ENCODE measurements at regions of chr4 and their contacts with region 1.

Region 1: GRCh38 chr4:95510145-95510544 is 38.6 kb downstream of the UNC5C start:
- DNase-seq: peak; percentile 52
- H3K4me3 ChIP-seq: no peak overlapping the region
- H3K27ac ChIP-seq: no peak overlapping the region
- H3K4me1 ChIP-seq: peaks cover 37% of the 10 kb centered on the region
- H3K27me3 ChIP-seq: no peaks in the 10 kb centered on the region
- CTCF ChIP-seq: peak; percentile 45 to 52
- POLR2A ChIP-seq: no peak

Region 2: DNA sequence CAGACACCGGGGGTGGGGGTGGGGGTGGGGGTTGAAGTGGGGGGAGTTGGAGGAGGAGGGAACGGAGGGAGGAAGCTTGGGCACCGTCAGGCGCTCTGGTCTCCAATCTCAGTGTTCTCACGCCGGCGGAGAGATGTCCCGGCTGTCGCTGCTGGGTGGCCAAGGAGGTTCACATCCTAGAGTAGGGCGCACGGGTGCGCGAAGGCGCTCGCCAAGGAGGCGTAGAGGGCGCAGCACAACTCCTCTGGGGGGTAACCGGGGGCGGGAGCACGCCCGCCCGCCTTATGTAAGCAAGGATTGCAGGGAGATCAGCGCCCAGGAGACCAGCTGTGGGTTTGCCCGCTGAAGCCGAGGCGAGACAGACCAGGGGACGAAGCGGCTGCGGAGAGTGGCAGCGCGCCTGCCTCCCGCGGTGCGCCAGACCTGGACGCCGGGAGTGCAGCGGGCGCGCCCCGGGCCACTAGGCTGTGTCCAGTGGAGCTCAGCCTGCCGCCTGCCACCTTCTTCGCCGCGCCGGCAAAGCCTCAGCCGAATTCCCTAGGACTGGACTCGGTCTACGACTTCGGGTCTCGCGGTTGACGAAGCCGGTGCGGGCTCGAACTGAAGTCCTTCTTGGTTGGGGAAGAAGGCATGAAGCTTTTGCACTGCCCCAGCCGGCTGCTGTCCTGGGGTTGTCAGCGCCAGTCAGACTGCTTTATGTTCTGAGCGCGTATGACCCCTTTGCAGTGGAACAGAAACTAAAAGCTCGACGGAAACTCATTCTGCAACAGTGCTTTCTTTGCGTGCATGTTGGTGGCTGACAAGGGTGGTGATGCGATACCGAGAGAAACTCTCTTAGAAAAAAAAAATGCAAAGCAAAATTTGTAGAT is 39.3 kb after region 1 on chr4:
- CTCF ChIA-PET with region 1: interaction called, 21 read pairs
- POLR2A ChIA-PET with region 1: no interaction called
- dilution Hi-C with region 1: no loop called
- intact Hi-C with region 1: no loop called
- DNase-seq: peak; percentile 41
- H3K4me3 ChIP-seq: peak overlapping the region; percentile 55 to 88 (median 82)
- H3K27ac ChIP-seq: no peak overlapping the region
- H3K4me1 ChIP-seq: peaks cover 20% of the 10 kb centered on the region
- H3K27me3 ChIP-seq: peaks cover 38 to 42% of the 10 kb centered on the region in 2 experiments
- CTCF ChIP-seq: no peak
- POLR2A ChIP-seq: no peak

Region 3: GRCh38 chr4:96035727-96036126 is 525.6 kb after region 1 on chr4:
- CTCF ChIA-PET with region 1: interaction called, 12 read pairs
- POLR2A ChIA-PET with region 1: no interaction called
- dilution Hi-C with region 1: no loop called
- intact Hi-C with region 1: loop called (anchors 5 kb)
- DNase-seq: peak; percentile 49
- H3K4me3 ChIP-seq: no peak overlapping the region
- H3K27ac ChIP-seq: no peak overlapping the region
- H3K4me1 ChIP-seq: no peaks in the 10 kb centered on the region
- H3K27me3 ChIP-seq: no peaks in the 10 kb centered on the region
- CTCF ChIP-seq: peak; percentile 10 to 27
- POLR2A ChIP-seq: no peak